ENCODE measurements at regions of chr2 and their contacts with region 1.

Region 1: DNA sequence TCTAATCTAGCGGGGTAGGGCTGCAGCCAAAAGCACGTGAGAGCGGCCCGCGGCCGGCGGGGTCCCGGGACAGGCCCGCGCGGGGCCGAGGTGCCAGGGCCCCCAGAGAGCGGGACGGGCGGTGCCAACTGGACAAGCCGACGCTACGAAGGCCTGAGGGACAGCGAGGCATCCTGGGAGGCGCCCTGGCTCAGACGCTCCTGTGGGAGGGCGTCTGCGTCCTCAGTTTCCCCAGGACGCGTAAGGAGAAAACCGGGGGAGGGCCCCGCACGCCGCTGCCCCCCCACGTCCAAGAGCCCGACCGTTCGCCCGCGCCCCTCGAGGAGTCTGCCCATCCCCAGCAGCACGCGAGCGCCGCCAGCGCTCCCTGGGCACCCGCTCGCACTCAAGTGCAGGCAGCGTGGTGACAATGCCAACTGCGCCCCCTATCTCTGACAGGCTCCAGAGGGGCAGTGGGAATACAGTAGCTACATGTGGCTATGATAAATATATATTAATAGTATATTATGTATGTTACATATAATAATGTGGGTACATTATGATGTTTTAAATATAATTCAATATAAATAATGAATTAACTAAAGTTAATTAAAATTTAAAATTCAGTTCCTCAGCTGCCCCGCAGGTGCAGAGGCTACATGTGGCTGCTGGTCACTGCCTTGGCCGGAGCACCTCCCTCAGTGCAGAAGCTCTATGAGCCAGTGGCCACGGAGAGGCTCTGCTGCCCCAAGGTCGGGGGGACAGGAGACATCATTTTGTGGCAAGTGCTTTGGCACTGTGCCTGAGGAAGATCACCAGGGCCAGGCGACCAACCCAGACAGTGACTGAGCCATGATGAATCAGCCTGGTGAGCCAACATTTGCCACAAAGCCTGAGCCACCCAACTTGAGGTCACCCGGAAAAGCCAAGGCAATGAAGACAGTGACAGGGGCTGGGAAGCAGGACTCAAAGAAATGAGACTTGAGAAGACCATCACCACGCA is 5.5 kb upstream of the SFT2D3 start:
- DNase-seq: peak; percentile 30
- H3K4me3 ChIP-seq: no peak overlapping the region
- H3K27ac ChIP-seq: no peak overlapping the region
- H3K4me1 ChIP-seq: peaks cover 11% of the 10 kb centered on the region
- H3K27me3 ChIP-seq: no peaks in the 10 kb centered on the region
- CTCF ChIP-seq: peak in 1 of 2 donors; percentile 27

Region 2: GRCh38 chr2:127342101-127342500 is 353.7 kb before region 1 on chr2:
- CTCF ChIA-PET with region 1: no interaction called
- dilution Hi-C with region 1: no loop called
- in situ Hi-C with region 1: no loop called
- intact Hi-C with region 1: no loop called
- DNase-seq: no peak
- H3K4me3 ChIP-seq: no peak overlapping the region
- H3K27ac ChIP-seq: no peak overlapping the region
- H3K4me1 ChIP-seq: no peaks in the 10 kb centered on the region
- H3K27me3 ChIP-seq: no peaks in the 10 kb centered on the region
- CTCF ChIP-seq: no peak

Region 3: DNA sequence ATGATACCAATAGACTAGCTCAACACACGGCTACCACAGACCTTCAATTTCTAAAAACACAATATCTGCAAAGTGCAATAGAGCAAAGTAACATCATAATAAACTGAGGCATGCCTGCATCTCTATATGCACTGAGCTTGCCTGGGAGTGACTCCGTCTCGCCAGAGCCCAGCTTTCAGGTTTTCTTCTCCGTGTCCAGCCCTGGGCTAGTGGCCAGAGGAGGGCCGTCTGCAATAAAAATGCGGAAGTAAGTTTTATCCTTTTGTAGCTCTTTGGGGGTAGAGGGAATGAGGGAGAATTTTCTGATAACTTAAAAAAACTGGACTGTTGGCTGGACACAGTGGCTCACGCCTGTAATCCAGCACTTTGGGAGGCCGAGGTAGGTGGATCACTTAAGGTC is 90.8 kb before region 1 on chr2:
- CTCF ChIA-PET with region 1: no interaction called
- dilution Hi-C with region 1: loop called (anchors 5 kb)
- in situ Hi-C with region 1: no loop called
- intact Hi-C with region 1: no loop called
- DNase-seq: no peak
- H3K4me3 ChIP-seq: no peak overlapping the region
- H3K27ac ChIP-seq: no peak overlapping the region
- H3K4me1 ChIP-seq: no peaks in the 10 kb centered on the region
- H3K27me3 ChIP-seq: no peaks in the 10 kb centered on the region
- CTCF ChIP-seq: no peak

Measured in mammary epithelial cell (primary cell).